Caco-2 (cell line): ENCODE measurements at regions of chr16 and their contacts with region 1.

Region 1: DNA sequence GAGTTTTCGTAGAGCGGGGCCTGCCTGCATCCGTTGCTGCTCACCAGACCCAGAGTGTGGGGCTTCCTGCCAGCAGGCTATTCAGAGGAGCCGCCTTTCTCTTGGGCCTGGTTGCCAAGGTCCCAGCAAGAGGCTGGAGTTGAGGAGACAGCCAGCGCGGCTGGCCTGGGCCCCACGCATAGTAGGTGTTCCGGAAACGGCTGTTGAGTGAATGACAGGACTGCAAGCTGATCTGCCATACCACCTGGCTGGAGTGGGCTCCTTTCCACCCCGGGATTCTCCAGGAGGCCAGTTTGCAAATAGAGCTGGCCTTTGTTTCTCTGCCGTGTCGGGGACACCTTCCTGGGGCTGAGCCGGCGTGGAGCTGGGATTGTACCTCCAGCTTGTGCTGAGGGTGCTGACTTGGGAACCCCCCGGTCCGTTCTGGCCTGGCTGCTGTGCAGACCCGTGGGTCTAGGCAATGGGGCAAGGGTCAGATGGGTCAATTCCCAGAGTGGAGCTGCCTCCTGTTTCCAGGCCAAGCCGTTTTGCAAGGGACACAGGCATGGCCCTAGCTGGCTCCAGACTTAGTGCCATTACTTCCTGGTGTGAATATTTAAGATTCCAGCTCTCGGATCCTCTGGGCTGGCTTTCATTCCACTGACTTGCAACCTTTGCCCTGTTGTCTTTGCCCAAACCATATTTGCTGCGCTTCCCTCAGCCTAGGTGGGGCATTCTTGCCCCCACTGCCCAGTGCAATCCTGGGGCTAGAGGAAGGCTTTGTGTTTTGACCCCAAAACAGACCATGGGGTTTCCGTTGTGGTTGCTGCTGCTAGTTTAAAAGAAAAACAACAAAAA is 68.8 kb downstream of the CMIP start:
- DNase-seq: peak; percentile 69 to 80
- H3K4me3 ChIP-seq: no peak overlapping the region
- H3K4me3 Mint-ChIP-seq: peak overlapping the region; percentile 16
- H3K27ac Mint-ChIP-seq: peak overlapping the region; percentile 86
- H3K4me1 ChIP-seq: peaks cover 37% of the 10 kb centered on the region
- H3K4me1 Mint-ChIP-seq: peaks cover 22% of the 10 kb centered on the region
- H3K27me3 ChIP-seq: no peaks in the 10 kb centered on the region
- H3K27me3 Mint-ChIP-seq: no peaks in the 10 kb centered on the region
- CTCF ChIP-seq: no peak

Region 2: GRCh38 chr16:81539009-81539758 is 25.8 kb after region 1 on chr16:
- CTCF ChIA-PET with region 1: no interaction called
- POLR2A ChIA-PET with region 1: no interaction called
- intact Hi-C with region 1: no loop called
- DNase-seq: no peak
- H3K4me3 ChIP-seq: no peak overlapping the region
- H3K4me3 Mint-ChIP-seq: no peak overlapping the region
- H3K27ac Mint-ChIP-seq: no peak overlapping the region
- H3K4me1 ChIP-seq: peaks cover 28% of the 10 kb centered on the region
- H3K4me1 Mint-ChIP-seq: peaks cover 54% of the 10 kb centered on the region
- H3K27me3 ChIP-seq: no peaks in the 10 kb centered on the region
- H3K27me3 Mint-ChIP-seq: no peaks in the 10 kb centered on the region
- CTCF ChIP-seq: no peak

Region 3: GRCh38 chr16:81842564-81843242 is 329.3 kb after region 1 on chr16:
- CTCF ChIA-PET with region 1: interaction called, 12 read pairs
- POLR2A ChIA-PET with region 1: no interaction called
- intact Hi-C with region 1: no loop called
- DNase-seq: no peak
- H3K4me3 ChIP-seq: no peak overlapping the region
- H3K4me3 Mint-ChIP-seq: no peak overlapping the region
- H3K27ac Mint-ChIP-seq: peak overlapping the region; percentile 11
- H3K4me1 ChIP-seq: no peaks in the 10 kb centered on the region
- H3K4me1 Mint-ChIP-seq: peaks cover 7% of the 10 kb centered on the region
- H3K27me3 ChIP-seq: no peaks in the 10 kb centered on the region
- H3K27me3 Mint-ChIP-seq: no peaks in the 10 kb centered on the region
- CTCF ChIP-seq: no peak